ENCODE measurements at regions of chr7 and their contacts with region 1.

Region 1: DNA sequence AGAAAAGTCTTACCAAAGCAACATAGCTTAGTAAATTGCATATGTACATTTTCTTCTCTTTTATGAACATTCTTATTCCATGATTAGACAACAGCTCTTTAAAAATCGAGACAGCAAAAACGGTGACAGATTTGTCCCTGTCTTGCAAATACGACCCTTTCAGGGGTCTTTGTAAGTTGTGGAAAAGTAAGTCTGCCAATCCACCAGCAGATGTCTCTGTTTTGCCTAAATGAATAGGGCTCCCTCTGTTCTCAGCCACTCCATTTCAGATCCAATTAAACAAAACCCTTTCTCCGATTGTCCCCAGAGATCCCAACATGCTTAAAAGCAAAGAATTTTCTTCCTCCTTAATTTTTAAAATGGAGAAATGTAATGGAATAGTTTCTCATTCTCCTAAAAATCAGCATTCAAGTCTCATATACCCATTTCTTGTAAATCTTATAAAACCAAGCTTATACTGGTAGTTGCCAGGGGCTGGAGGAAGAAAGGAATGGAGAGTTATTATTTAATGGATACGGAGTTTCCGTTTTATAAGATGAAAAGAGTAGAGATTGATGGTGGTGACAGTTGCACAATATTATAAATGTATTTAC is 61.0 kb upstream of the NFE2L3 start:
- DNase-seq: peak in 2 of 9 experiments; percentile 59 to 73
- ATAC-seq: peak; percentile 61
- H3K4me3 ChIP-seq: no peak overlapping the region
- H3K4me3 Mint-ChIP-seq: no peak overlapping the region
- H3K27ac ChIP-seq: no peak overlapping the region
- H3K27ac Mint-ChIP-seq: no peak overlapping the region
- H3K4me1 ChIP-seq: peaks cover 6% of the 10 kb centered on the region
- H3K4me1 Mint-ChIP-seq: peaks cover 16% of the 10 kb centered on the region
- H3K27me3 ChIP-seq: no peaks in the 10 kb centered on the region
- H3K27me3 Mint-ChIP-seq: no peaks in the 10 kb centered on the region
- CTCF ChIP-seq: peak; percentile 70

Region 2: DNA sequence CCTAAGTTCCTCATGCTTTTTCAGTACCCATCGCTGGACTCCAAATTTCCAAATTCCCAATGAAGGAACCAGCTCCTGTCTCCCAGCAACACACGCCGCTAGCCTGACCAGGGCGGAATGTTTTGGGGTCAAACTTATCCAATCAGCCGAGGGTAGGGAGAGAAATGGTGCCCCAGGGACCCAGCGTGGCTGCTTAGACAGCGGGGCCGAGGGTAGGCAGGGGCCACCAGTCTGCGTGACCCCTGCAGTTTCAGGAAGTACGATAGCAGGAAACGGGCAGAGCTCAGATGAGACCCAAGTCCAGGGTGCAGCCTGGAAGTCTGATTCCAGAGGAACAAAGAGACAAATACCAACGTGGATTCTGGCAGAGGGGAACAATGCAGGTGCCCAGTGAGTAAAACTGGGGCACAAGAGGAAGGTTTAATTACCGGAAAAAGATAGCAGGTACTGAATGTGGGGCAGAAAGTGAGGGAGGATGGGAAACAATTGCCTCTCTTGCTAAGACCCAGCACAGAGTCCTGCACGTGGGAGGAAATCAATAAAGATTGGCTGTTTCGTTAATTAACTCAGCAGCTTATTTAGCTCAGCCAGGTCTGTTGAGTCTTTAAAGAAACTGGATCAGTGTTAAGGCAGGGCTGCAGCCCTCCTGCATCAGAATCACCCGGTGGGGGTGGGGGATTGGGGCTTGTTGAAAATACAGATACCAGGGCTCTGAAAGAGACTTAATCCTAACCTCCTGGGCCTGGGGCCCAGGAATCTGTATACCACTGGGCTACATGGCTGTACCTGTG is 10.5 kb after region 1 on chr7:
- CTCF ChIA-PET with region 1: interaction called, 41 read pairs
- POLR2A ChIA-PET with region 1: interaction called, 3 read pairs
- intact Hi-C with region 1: no loop called
- DNase-seq: peak in 1 of 9 experiments; percentile 27
- ATAC-seq: no peak
- H3K4me3 ChIP-seq: no peak overlapping the region
- H3K4me3 Mint-ChIP-seq: peak overlapping the region; percentile 71
- H3K27ac ChIP-seq: no peak overlapping the region
- H3K27ac Mint-ChIP-seq: peak overlapping the region; percentile 83
- H3K4me1 ChIP-seq: peaks cover 40% of the 10 kb centered on the region
- H3K4me1 Mint-ChIP-seq: peaks cover 52% of the 10 kb centered on the region
- H3K27me3 ChIP-seq: no peaks in the 10 kb centered on the region
- H3K27me3 Mint-ChIP-seq: no peaks in the 10 kb centered on the region
- CTCF ChIP-seq: no peak

Region 3: GRCh38 chr7:26127411-26127810 is 36.4 kb after region 1 on chr7:
- CTCF ChIA-PET with region 1: interaction called, 17 read pairs
- POLR2A ChIA-PET with region 1: no interaction called
- intact Hi-C with region 1: no loop called
- DNase-seq: no peak
- ATAC-seq: no peak
- H3K4me3 ChIP-seq: no peak overlapping the region
- H3K4me3 Mint-ChIP-seq: no peak overlapping the region
- H3K27ac ChIP-seq: no peak overlapping the region
- H3K27ac Mint-ChIP-seq: no peak overlapping the region
- H3K4me1 ChIP-seq: no peaks in the 10 kb centered on the region
- H3K4me1 Mint-ChIP-seq: no peaks in the 10 kb centered on the region
- H3K27me3 ChIP-seq: no peaks in the 10 kb centered on the region
- H3K27me3 Mint-ChIP-seq: no peaks in the 10 kb centered on the region
- CTCF ChIP-seq: no peak

Region 4: GRCh38 chr7:26167301-26167934 is 76.4 kb after region 1 on chr7:
- CTCF ChIA-PET with region 1: interaction called, 10 read pairs
- POLR2A ChIA-PET with region 1: no interaction called
- intact Hi-C with region 1: no loop called
- DNase-seq: peak in 3 of 9 experiments; percentile 54 to 84 (median 74)
- ATAC-seq: peak; percentile 88
- H3K4me3 ChIP-seq: no peak overlapping the region
- H3K4me3 Mint-ChIP-seq: no peak overlapping the region
- H3K27ac ChIP-seq: peak overlapping the region in 1 of 2 experiments; percentile 84
- H3K27ac Mint-ChIP-seq: peak overlapping the region; percentile 87
- H3K4me1 ChIP-seq: peaks cover 14% of the 10 kb centered on the region
- H3K4me1 Mint-ChIP-seq: peaks cover 16% of the 10 kb centered on the region
- H3K27me3 ChIP-seq: no peaks in the 10 kb centered on the region
- H3K27me3 Mint-ChIP-seq: no peaks in the 10 kb centered on the region
- CTCF ChIP-seq: no peak

Region 5: GRCh38 chr7:26284995-26285632 is 194.1 kb after region 1 on chr7:
- CTCF ChIA-PET with region 1: interaction called, 28 read pairs
- POLR2A ChIA-PET with region 1: no interaction called
- intact Hi-C with region 1: loop called (anchors 1 to 2 kb)
- DNase-seq: peak in 2 of 9 experiments; percentile 35 to 53
- ATAC-seq: peak; percentile 95
- H3K4me3 ChIP-seq: no peak overlapping the region
- H3K4me3 Mint-ChIP-seq: no peak overlapping the region
- H3K27ac ChIP-seq: no peak overlapping the region
- H3K27ac Mint-ChIP-seq: no peak overlapping the region
- H3K4me1 ChIP-seq: no peaks in the 10 kb centered on the region
- H3K4me1 Mint-ChIP-seq: no peaks in the 10 kb centered on the region
- H3K27me3 ChIP-seq: no peaks in the 10 kb centered on the region
- H3K27me3 Mint-ChIP-seq: no peaks in the 10 kb centered on the region
- CTCF ChIP-seq: peak; percentile 38

Region 6: GRCh38 chr7:26667500-26668133 is 576.6 kb after region 1 on chr7:
- CTCF ChIA-PET with region 1: interaction called, 3 read pairs
- POLR2A ChIA-PET with region 1: no interaction called
- intact Hi-C with region 1: loop called (anchors 5 kb)
- DNase-seq: peak; percentile 4 to 82 (median 46)
- ATAC-seq: peak; percentile 70
- H3K4me3 ChIP-seq: no peak overlapping the region
- H3K4me3 Mint-ChIP-seq: no peak overlapping the region
- H3K27ac ChIP-seq: no peak overlapping the region
- H3K27ac Mint-ChIP-seq: no peak overlapping the region
- H3K4me1 ChIP-seq: no peaks in the 10 kb centered on the region
- H3K4me1 Mint-ChIP-seq: peaks cover 20% of the 10 kb centered on the region
- H3K27me3 ChIP-seq: no peaks in the 10 kb centered on the region
- H3K27me3 Mint-ChIP-seq: peaks cover 12% of the 10 kb centered on the region
- CTCF ChIP-seq: peak; percentile 70